Activated CD4-positive, alpha-beta T cell treated with anti-CD3 and anti-CD28 coated beads, Interleukin-2, amount 10 ng/mL, durations not matched to agents 7 days and 5 days (primary cell): ENCODE measurements at regions of chr1 and their contacts with region 1.

Region 1: DNA sequence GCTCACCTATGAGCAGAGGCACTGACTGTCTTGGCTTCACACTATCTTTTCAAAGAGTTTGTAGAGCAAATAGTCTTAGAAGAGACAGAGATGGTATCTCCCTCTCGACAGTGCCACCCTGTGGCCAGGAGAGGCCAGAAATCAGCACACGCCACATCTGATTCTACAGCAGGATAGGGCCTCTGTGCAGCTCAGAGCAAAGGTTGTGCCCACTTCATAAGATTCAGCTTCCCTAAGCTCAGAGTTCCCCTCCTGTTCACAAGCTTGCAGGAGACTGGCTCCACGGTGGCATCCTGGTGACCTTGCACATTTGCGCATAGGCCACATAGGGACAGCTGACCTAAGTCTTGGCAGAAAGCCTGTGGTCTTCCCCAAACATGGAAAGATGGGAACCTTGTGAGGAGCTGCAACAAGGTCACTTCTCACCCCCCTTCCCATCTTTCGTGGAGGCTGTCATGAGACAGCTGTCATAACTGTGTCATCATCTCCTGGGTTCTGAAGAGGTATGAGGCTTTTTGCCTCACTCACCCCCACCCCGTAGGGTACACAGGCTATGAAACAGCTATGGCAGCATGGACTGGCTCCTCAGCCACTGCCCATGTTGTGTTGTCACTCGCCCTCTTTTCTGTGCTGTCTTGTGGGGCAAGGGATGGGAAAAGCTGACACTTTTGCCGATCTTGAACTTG is 3.0 kb downstream of the ITLN2 start:
- DNase-seq: peak; percentile 83
- H3K4me3 Mint-ChIP-seq: no peak overlapping the region
- H3K27ac Mint-ChIP-seq: no peak overlapping the region
- H3K4me1 Mint-ChIP-seq: peaks cover 11% of the 10 kb centered on the region
- H3K27me3 Mint-ChIP-seq: no peaks in the 10 kb centered on the region

Region 2: GRCh38 chr1:160675641-160676410 is 275.8 kb before region 1 on chr1:
- CTCF ChIA-PET with region 1: interaction called, 12 read pairs
- POLR2A ChIA-PET with region 1: no interaction called
- DNase-seq: peak; percentile 79
- H3K4me3 Mint-ChIP-seq: peak overlapping the region; percentile 28
- H3K27ac Mint-ChIP-seq: no peak overlapping the region
- H3K4me1 Mint-ChIP-seq: peaks cover 28% of the 10 kb centered on the region
- H3K27me3 Mint-ChIP-seq: no peaks in the 10 kb centered on the region

Region 3: GRCh38 chr1:160726498-160727315 is 224.9 kb before region 1 on chr1:
- CTCF ChIA-PET with region 1: interaction called, 10 read pairs
- POLR2A ChIA-PET with region 1: no interaction called
- DNase-seq: peak; percentile 79
- H3K4me3 Mint-ChIP-seq: no peak overlapping the region
- H3K27ac Mint-ChIP-seq: no peak overlapping the region
- H3K4me1 Mint-ChIP-seq: peaks cover 24% of the 10 kb centered on the region
- H3K27me3 Mint-ChIP-seq: no peaks in the 10 kb centered on the region

Region 4: DNA sequence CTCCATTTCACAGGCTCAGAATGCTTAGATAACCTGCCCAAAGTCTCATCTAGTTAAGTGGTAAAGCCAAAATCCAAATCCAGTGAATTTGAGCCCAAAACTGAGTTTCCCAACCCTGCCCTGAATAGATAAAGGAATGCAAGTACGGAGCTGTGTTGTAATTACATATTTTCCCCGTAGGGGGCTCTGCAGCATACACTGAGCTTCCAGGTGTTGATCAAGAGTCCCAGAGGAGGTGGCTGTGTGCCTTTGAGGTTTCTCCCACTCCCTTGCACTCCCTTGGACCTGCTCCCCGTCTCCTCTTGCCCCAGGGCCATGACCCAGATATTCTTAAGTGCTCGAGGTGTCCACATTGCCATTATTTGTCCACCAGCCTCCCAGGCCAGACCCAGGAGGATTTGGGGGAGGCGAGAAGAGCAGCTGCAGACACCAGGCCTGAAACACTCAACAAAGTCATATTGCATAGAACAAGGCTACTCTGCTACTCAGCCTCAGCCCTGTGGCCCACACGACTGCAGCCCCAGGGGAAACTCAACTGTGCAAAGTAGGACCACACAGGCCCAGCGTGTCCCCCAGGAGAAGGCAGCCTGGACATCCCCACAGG is 174.0 kb before region 1 on chr1:
- CTCF ChIA-PET with region 1: interaction called, 27 read pairs
- POLR2A ChIA-PET with region 1: no interaction called
- DNase-seq: peak; percentile 62
- H3K4me3 Mint-ChIP-seq: no peak overlapping the region
- H3K27ac Mint-ChIP-seq: no peak overlapping the region
- H3K4me1 Mint-ChIP-seq: peaks cover 46% of the 10 kb centered on the region
- H3K27me3 Mint-ChIP-seq: no peaks in the 10 kb centered on the region

Region 5: GRCh38 chr1:160830321-160831153 is 121.0 kb before region 1 on chr1:
- CTCF ChIA-PET with region 1: interaction called, 87 read pairs
- POLR2A ChIA-PET with region 1: no interaction called
- DNase-seq: peak; percentile 89
- H3K4me3 Mint-ChIP-seq: no peak overlapping the region
- H3K27ac Mint-ChIP-seq: no peak overlapping the region
- H3K4me1 Mint-ChIP-seq: peaks cover 27% of the 10 kb centered on the region
- H3K27me3 Mint-ChIP-seq: no peaks in the 10 kb centered on the region

Region 6: GRCh38 chr1:160837558-160838205 is 113.9 kb before region 1 on chr1:
- CTCF ChIA-PET with region 1: interaction called, 87 read pairs
- POLR2A ChIA-PET with region 1: no interaction called
- DNase-seq: peak; percentile 92
- H3K4me3 Mint-ChIP-seq: peak overlapping the region; percentile 56
- H3K27ac Mint-ChIP-seq: peak overlapping the region; percentile 93
- H3K4me1 Mint-ChIP-seq: peaks cover 63% of the 10 kb centered on the region
- H3K27me3 Mint-ChIP-seq: no peaks in the 10 kb centered on the region

Region 7: DNA sequence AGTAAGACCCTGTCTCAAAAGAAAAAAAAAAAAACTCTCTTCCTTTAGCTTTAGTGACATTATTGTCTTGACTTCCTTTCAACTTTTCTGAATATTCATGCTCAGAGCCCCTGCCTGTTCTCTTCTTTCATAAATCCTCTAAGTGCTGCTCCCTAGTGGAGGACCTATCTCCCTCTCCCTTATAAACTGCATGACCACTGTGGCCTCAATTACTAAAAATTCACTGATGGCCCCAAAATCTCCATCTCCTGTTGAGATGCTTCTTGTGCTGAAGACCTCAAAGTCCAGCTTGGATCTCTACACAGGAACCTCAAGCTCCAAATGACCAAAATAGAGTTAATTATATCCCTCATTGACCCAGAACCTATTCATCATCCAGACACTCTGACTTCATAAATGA is 74.4 kb before region 1 on chr1:
- CTCF ChIA-PET with region 1: no interaction called
- POLR2A ChIA-PET with region 1: no interaction called
- DNase-seq: peak; percentile 38
- H3K4me3 Mint-ChIP-seq: no peak overlapping the region
- H3K27ac Mint-ChIP-seq: peak overlapping the region; percentile 0
- H3K4me1 Mint-ChIP-seq: peaks cover 13% of the 10 kb centered on the region
- H3K27me3 Mint-ChIP-seq: peaks cover 4% of the 10 kb centered on the region